ENCODE measurements at regions of chr1 and their contacts with region 1.

Region 1: DNA sequence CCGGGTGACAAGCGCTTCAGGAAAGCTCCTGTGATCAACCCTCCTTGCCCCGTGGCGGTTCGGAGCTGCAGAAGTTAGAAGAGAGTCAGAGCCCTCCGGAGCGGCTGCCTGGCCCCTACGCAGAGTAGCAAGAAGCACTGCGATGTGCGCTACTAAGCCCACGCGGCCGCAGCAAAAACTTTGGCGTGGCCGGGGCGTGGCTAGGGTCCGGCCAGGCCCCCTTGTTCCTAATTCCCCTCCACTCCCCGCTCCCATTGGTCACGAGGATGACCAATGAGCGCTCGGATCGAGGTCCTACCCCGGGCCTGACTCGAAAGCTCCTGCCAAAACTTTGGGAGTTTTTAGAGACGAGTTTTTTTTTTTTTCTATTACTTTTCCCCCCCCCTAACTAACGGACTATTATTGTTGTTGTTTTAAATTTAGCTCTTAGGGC is at the start of gene HLX:
- DNase-seq: peak; percentile 77 to 89 (median 81)
- H3K4me3 ChIP-seq: peak within 1 kb of the TSS; percentile 58
- H3K27ac ChIP-seq: peak within 1 kb of the TSS; percentile 65 to 85
- H3K4me1 ChIP-seq: peaks cover 6% of the 10 kb centered on the region
- H3K27me3 ChIP-seq: no peaks in the 10 kb centered on the region
- CTCF ChIP-seq: no peak
- EP300 ChIP-seq: no peak
- POLR2A ChIP-seq: no peak
- total RNA-seq, gene HLX: 2.1 to 7.6 (median 3.1) TPM

Region 2: DNA sequence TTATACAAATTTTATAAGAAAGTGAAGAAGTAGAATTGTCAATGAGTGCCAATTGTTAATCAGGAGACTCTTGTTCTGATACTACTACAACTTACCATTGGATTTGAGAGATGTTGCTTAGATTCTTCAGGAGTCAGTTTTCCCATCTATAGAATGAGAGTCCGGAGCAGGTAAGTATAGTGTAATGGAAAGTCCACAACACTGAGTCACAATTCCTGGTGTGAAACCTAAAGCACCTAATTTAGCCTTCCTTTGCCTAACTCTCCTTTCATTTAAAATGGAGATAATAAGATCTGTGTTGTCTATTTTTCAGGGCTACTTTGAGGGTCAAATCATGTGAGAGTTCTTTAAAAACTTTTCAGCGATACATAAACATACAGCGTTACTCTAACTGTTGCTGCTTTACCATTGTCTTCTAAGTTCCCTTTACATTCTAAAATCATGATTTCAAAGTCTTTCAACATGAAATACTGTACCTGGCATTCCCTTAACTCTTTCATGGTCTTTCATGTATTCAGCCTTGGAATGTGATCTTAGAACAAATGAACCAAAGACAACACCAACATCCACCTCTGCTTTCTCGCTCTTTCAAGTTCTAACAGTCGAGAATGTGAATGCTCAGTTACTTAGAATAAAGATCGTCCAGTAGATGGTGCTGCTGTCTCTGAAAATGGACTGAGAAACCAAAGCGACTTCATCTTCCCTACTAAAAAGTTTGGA is 1041.7 kb before region 1 on chr1:
- intact Hi-C with region 1: no loop called
- DNase-seq: no peak
- H3K4me3 ChIP-seq: no peak overlapping the region
- H3K27ac ChIP-seq: no peak overlapping the region
- H3K4me1 ChIP-seq: no peaks in the 10 kb centered on the region
- H3K27me3 ChIP-seq: no peaks in the 10 kb centered on the region
- CTCF ChIP-seq: peak in 1 of 3 donors; percentile 15
- EP300 ChIP-seq: no peak
- POLR2A ChIP-seq: no peak

Region 3: DNA sequence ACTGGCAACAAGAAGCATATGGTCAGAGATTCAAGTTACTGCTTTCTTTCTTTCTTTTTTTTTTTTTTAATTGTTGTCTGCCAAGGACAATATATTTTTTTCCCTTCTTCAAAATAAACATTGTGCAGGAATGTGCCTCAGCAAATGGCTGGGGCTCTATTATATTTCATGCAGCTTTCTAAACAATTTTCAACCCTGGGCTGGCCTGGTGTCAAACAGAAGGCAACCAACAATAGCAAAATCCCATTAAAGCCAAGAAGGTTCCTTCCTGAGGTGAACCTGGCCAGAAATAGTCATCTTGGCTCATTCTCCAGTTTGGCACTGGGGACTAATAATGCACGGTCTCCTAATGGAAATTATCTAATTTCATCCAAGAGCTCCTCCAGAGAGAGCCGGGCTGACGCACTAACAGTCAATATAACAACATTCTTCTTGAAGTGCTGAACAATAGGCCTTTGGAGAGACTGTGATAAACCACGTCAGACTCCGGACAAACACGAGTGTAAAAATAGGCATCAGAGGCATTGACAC is 35.5 kb before region 1 on chr1:
- intact Hi-C with region 1: loop called in 1 of 4 experiments (anchors 2 kb)
- DNase-seq: peak in 1 of 5 donors; percentile 21
- H3K4me3 ChIP-seq: no peak overlapping the region
- H3K27ac ChIP-seq: no peak overlapping the region
- H3K4me1 ChIP-seq: peaks cover 3% of the 10 kb centered on the region
- H3K27me3 ChIP-seq: no peaks in the 10 kb centered on the region
- CTCF ChIP-seq: no peak
- EP300 ChIP-seq: no peak
- POLR2A ChIP-seq: no peak

Region 4: DNA sequence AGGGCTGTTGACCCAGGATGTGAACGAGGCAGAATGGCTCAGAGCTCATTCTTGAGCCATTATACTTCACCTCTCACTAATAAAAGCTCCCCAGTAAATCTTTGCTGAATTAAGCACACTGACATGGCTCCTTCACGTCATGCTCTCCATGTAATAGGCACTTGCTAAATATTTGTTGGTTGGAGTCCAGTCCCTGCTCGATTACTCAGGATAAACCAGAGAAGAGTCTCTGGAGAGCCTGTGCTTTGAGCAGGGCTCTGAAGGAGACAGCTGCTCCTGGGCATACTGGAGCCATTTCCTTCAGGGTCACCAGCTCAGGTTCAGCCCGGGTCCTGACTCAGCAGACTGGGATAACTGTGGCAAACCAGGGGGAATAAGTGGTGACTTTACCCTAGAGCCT is 47.1 kb after region 1 on chr1:
- intact Hi-C with region 1: no loop called
- DNase-seq: no peak
- H3K4me3 ChIP-seq: no peak overlapping the region
- H3K27ac ChIP-seq: no peak overlapping the region
- H3K4me1 ChIP-seq: no peaks in the 10 kb centered on the region
- H3K27me3 ChIP-seq: no peaks in the 10 kb centered on the region
- CTCF ChIP-seq: no peak
- EP300 ChIP-seq: no peak
- POLR2A ChIP-seq: no peak

Region 5: DNA sequence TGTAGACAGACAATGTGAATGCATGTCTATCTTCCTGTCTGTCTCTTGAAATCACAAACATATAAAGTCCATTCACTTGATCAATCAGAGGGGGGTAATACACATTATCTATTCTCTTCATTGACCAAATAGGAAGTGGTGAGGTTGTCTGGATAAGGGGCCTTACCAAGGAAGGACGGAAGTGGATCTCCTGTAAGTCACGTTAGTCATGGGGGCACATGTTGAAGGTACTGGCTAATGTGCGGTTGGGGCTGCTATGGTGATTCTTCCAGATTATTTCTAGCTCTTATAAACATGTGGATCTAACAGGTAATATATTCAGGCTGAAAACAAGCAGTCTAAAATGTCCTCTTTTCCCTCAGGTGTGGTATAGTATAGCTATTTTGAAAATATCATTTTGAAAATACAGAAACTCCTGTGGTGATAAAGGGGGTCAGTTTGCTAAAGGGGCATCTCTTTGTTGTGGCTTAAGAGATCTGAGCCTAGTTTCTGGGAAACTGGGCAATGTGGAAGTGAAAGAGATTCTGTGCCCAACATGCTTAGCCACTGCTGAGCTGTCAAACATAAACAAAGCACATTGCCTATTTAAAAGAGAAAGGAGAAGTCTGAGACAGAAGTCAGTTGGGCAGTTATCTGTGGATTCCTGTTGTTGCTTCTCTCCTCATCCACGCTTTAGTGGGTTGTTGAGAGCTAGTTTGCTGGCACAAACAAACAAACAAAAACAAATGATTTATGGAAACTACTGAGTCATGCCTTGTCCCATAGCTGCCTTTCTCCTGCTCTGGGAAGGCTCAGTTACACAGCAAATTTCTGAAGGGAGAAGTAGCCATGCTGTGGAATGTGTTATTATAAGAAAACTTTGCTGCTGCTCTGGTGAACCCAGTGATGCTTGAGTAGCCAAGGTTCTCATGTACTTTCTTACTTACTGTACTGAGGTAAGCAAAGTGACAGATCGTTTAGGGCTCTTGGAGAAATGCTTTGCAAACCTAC is 167.0 kb after region 1 on chr1:
- intact Hi-C with region 1: no loop called
- DNase-seq: no peak
- H3K4me3 ChIP-seq: no peak overlapping the region
- H3K27ac ChIP-seq: no peak overlapping the region
- H3K4me1 ChIP-seq: no peaks in the 10 kb centered on the region
- H3K27me3 ChIP-seq: no peaks in the 10 kb centered on the region
- CTCF ChIP-seq: no peak
- EP300 ChIP-seq: no peak
- POLR2A ChIP-seq: no peak

Measured in ovary (tissue), 10 donors.